RWPE1 (cell line): ENCODE measurements at regions of chr9 and their contacts with region 1.

Region 1: GRCh38 chr9:13088720-13089427 is 190.6 kb downstream of the MPDZ start:
- DNase-seq: peak; percentile 53
- H3K27ac ChIP-seq: no peak overlapping the region
- CTCF ChIP-seq: peak; percentile 76

Region 2: DNA sequence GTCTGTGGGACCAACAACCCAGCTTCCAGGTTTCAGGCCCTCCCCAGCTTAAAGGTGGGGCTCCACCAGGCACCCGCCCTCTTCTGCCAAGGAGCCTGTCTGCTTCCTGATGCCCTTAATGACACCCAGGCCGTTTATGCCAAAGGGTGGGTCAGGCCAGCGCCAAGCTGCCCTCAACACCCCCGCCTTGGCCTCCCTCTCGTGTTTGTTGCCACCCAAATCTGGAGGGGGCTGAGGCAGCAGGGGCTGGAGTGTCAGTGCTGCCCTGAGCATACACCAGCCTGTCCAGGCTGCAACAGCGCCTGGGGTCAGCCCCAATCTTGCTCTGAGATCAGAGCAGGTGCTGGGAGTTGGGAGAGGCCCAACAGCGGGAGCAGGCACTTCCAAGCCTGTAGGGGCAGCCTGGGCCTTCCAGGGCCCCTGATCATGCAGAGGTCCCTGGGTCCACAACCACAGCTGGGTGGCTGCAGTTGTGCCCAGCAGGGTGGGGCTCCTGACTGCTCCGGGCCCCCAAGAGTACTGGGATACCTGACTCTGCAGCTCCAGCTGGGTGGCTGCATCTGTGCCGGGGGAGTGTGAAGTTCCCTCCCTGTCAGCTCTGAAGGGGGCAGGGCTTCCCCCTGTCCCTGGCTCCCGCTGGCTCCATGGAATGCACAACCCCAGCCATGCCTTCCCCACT is 430.2 kb before region 1 on chr9:
- CTCF ChIA-PET with region 1: no interaction called
- POLR2A ChIA-PET with region 1: no interaction called
- DNase-seq: no peak
- H3K27ac ChIP-seq: no peak overlapping the region
- CTCF ChIP-seq: no peak

Region 3: GRCh38 chr9:13033959-13034693 is 54.7 kb before region 1 on chr9:
- CTCF ChIA-PET with region 1: interaction called, 28 read pairs
- POLR2A ChIA-PET with region 1: no interaction called
- DNase-seq: peak; percentile 70
- H3K27ac ChIP-seq: no peak overlapping the region
- CTCF ChIP-seq: peak; percentile 75